Panc1 (cell line): ENCODE measurements at regions of chr17 and their contacts with region 1.

Region 1: GRCh38 chr17:68972119-68972704 is 17.0 kb upstream of the ABCA8 start:
- DNase-seq: no peak
- ATAC-seq: no peak
- H3K4me3 ChIP-seq: no peak overlapping the region
- H3K27ac ChIP-seq: no peak overlapping the region
- H3K4me1 ChIP-seq: no peaks in the 10 kb centered on the region
- H3K27me3 ChIP-seq: no peaks in the 10 kb centered on the region
- CTCF ChIP-seq: peak; percentile 64; the same call in 1 of the 2 replicates

Region 2: DNA sequence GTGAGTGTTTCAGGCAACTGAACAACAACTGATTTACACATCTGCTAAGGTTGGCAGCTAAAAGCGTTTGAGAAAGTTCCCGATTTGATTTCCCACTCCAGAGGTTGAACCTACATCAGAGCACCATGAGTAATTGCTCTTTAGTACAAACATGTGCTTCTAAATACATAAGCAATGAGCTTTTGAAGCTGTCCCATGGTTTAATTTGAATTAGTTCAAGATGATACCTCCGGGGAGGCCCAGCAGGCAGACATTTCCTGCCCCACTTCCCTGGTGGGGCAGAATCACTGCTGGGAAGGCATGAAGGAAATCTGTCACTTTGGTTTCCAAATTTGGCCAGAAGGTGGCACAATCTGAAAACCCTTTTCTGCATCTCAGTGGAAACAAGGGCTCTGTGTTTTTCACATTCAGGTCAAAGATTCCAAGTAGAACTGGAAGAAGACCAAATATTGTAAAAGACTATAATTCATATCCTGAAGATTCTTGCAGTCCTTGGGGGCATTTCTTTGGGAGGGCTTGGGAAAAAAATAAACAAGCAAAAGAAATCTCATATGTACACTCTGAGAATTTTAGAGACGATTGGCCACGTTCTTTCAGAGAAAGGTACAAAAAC is 194.9 kb before region 1 on chr17:
- CTCF ChIA-PET with region 1: no interaction called
- POLR2A ChIA-PET with region 1: no interaction called
- in situ Hi-C with region 1: no loop called
- intact Hi-C with region 1: loop called (anchors 2 kb)
- DNase-seq: peak; percentile 48
- ATAC-seq: no peak
- H3K4me3 ChIP-seq: no peak overlapping the region
- H3K27ac ChIP-seq: no peak overlapping the region
- H3K4me1 ChIP-seq: no peaks in the 10 kb centered on the region
- H3K27me3 ChIP-seq: no peaks in the 10 kb centered on the region
- CTCF ChIP-seq: peak; percentile 70

Region 3: GRCh38 chr17:68817352-68817751 is 154.9 kb before region 1 on chr17:
- CTCF ChIA-PET with region 1: no interaction called
- POLR2A ChIA-PET with region 1: interaction called, 11 read pairs
- in situ Hi-C with region 1: no loop called
- intact Hi-C with region 1: no loop called
- DNase-seq: no peak
- ATAC-seq: no peak
- H3K4me3 ChIP-seq: no peak overlapping the region
- H3K27ac ChIP-seq: no peak overlapping the region
- H3K4me1 ChIP-seq: no peaks in the 10 kb centered on the region
- H3K27me3 ChIP-seq: no peaks in the 10 kb centered on the region
- CTCF ChIP-seq: no peak

Region 4: DNA sequence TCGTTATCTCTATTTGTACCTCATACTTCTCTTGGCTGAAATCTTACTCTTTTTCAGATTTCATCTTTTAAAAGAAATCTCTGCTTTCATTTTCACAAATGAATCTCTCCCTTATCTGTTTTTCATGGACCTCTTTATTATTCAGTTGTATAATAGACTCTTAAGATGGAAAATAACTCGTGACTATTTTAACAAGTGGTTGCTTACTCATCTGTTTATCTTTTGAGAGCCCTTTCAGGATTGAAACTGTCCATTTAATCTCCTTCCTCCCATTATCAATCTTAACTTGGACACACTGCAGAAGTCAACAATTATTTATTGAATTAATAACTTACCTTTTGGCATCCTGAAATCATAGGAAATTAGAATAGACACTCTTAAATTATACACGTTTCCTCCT is 85.8 kb before region 1 on chr17:
- CTCF ChIA-PET with region 1: no interaction called
- POLR2A ChIA-PET with region 1: no interaction called
- in situ Hi-C with region 1: no loop called
- intact Hi-C with region 1: no loop called
- DNase-seq: no peak
- ATAC-seq: no peak
- H3K4me3 ChIP-seq: no peak overlapping the region
- H3K27ac ChIP-seq: no peak overlapping the region
- H3K4me1 ChIP-seq: no peaks in the 10 kb centered on the region
- H3K27me3 ChIP-seq: no peaks in the 10 kb centered on the region
- CTCF ChIP-seq: no peak

Region 5: GRCh38 chr17:68954863-68955841 is 17.1 kb before region 1 on chr17 and contains the start of gene ABCA8:
- CTCF ChIA-PET with region 1: no interaction called
- POLR2A ChIA-PET with region 1: no interaction called
- in situ Hi-C with region 1: no loop called
- intact Hi-C with region 1: no loop called
- DNase-seq: no peak
- ATAC-seq: no peak
- H3K4me3 ChIP-seq: no peak within 1 kb of the TSS
- H3K27ac ChIP-seq: no peak within 1 kb of the TSS
- H3K4me1 ChIP-seq: no peaks in the 10 kb centered on the region
- H3K27me3 ChIP-seq: no peaks in the 10 kb centered on the region
- CTCF ChIP-seq: no peak
- total RNA-seq, gene ABCA8: 0.23 TPM

Region 6: GRCh38 chr17:68987966-68988365 is 15.8 kb after region 1 on chr17:
- CTCF ChIA-PET with region 1: no interaction called
- POLR2A ChIA-PET with region 1: no interaction called
- in situ Hi-C with region 1: no loop called
- intact Hi-C with region 1: no loop called
- DNase-seq: no peak
- ATAC-seq: no peak
- H3K4me3 ChIP-seq: no peak overlapping the region
- H3K27ac ChIP-seq: no peak overlapping the region
- H3K4me1 ChIP-seq: no peaks in the 10 kb centered on the region
- H3K27me3 ChIP-seq: no peaks in the 10 kb centered on the region
- CTCF ChIP-seq: no peak

Region 7: GRCh38 chr17:69235338-69235930 is 263.2 kb after region 1 on chr17:
- CTCF ChIA-PET with region 1: no interaction called
- POLR2A ChIA-PET with region 1: no interaction called
- in situ Hi-C with region 1: no loop called
- intact Hi-C with region 1: loop called (anchors 10 kb)
- DNase-seq: peak; percentile 72
- ATAC-seq: peak; percentile 93
- H3K4me3 ChIP-seq: no peak overlapping the region
- H3K27ac ChIP-seq: no peak overlapping the region
- H3K4me1 ChIP-seq: no peaks in the 10 kb centered on the region
- H3K27me3 ChIP-seq: no peaks in the 10 kb centered on the region
- CTCF ChIP-seq: peak; percentile 82